ENCODE measurements at regions of chr12 and their contacts with region 1.

Region 1: DNA sequence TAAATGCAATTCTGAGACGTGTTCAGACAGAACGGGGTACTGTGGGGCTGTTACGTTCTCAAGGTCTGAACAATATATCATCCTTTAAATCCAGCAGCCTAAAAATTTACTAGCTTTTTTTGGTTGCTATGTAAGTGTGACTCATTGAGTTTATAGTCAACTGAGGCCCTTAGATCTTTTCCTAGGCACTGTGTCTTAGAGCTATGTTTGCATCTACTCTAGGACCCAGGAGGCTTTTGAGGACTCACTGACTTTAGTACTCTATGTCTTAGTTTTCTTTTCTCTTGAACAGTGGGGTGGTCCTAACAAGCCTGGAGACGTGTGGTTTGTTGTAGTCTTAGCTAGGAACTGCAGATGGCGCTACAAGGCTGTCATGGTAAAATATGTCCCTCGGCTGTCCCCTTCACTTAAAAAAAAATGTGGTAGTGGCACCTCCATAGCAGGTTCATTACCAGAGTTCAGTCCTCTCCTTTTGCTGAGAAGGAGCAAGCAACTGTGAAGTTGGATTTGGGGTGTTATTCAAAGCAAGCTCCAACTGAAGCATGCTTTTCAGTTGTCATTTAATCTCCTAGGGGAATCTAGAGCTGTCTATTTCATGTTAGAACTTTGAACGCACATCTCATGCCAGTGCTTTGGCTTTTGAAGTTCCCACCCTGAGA is 8.7 kb upstream of the SPATS2 start:
- DNase-seq: peak; percentile 69
- H3K4me3 Mint-ChIP-seq: no peak overlapping the region
- H3K27ac Mint-ChIP-seq: no peak overlapping the region
- H3K4me1 Mint-ChIP-seq: peaks cover 5% of the 10 kb centered on the region
- H3K27me3 Mint-ChIP-seq: peaks cover 21% of the 10 kb centered on the region

Region 2: DNA sequence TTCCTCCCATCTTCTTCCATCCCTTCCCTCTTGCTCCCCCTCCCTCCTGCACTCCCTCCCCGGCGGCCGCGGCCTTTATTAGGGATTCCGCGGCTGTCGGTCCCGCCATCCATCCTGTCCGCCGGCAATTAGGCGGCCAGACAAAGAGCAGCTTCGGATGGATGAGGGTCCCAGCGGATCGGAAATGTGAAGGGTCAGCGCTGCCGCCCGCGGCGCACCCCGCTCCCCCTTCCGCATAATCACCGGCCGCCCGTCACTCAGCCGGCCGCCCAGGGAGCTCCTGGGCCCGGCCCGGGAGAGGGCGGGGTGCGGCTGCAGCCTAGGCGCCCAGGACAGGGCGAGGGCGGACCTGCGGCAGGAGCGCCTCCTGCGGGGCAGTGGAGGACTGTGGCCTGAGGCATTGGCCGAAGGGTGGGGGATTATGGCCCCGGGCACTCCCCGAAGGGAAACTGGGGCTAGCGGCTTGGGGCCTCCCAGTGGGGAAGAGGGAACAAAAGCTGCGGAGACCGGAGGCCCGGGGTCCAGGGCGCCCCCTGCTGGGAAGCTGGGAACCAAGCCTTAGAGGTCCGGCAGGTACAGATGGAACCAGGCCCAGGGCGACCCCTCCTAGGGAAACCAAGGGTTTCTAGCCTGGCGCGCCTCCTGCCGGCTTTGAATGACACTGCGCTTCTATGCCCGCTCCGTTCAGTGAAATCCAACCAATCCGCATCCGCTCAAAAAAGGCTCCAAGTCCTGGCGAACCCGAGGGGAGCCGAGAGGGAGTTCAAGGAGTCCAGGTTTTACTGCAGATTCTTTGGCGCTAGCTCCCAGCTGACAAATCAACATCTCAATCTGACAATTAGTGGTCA is 16.3 kb before region 1 on chr12:
- CTCF ChIA-PET with region 1: interaction called, 98 read pairs
- POLR2A ChIA-PET with region 1: no interaction called
- intact Hi-C with region 1: no loop called
- DNase-seq: peak; percentile 90
- H3K4me3 Mint-ChIP-seq: peak overlapping the region; percentile 53
- H3K27ac Mint-ChIP-seq: no peak overlapping the region
- H3K4me1 Mint-ChIP-seq: peaks cover 43% of the 10 kb centered on the region
- H3K27me3 Mint-ChIP-seq: peaks cover 64% of the 10 kb centered on the region

Region 3: GRCh38 chr12:49462083-49462744 is 103.6 kb after region 1 on chr12:
- CTCF ChIA-PET with region 1: interaction called, 13 read pairs
- POLR2A ChIA-PET with region 1: interaction called, 6 read pairs
- intact Hi-C with region 1: no loop called
- DNase-seq: no peak
- H3K4me3 Mint-ChIP-seq: no peak overlapping the region
- H3K27ac Mint-ChIP-seq: no peak overlapping the region
- H3K4me1 Mint-ChIP-seq: no peaks in the 10 kb centered on the region
- H3K27me3 Mint-ChIP-seq: no peaks in the 10 kb centered on the region

Region 4: DNA sequence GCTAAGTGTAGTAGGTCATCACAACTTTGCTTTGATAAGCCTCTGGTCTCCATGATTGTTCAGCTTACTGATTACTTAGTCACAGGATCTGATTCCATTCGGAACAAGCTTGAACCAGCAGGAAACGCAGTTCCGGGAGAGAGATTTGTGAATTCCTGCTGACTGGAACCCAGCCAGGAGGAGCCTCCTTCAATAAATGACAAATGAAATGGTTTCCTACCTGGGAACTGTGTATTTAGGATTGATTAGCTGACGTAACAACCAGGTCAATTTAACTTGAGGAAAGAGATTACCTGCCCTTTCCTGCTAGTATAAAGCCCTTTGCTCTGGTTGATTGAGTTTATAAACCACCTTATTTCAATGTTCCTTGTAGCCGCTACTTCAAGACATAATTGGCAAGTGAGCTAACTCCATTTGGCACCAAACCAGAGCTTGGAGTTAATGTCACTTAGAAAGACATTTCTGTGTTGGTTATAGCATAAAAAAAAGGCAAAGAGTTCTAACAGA is 145.1 kb after region 1 on chr12:
- CTCF ChIA-PET with region 1: interaction called, 428 read pairs
- POLR2A ChIA-PET with region 1: no interaction called
- intact Hi-C with region 1: no loop called
- DNase-seq: no peak
- H3K4me3 Mint-ChIP-seq: no peak overlapping the region
- H3K27ac Mint-ChIP-seq: no peak overlapping the region
- H3K4me1 Mint-ChIP-seq: peaks cover 1% of the 10 kb centered on the region
- H3K27me3 Mint-ChIP-seq: no peaks in the 10 kb centered on the region

Region 5: GRCh38 chr12:49567611-49568441 is 209.2 kb after region 1 on chr12 and contains the start of gene MCRS1:
- CTCF ChIA-PET with region 1: interaction called, 13 read pairs
- POLR2A ChIA-PET with region 1: no interaction called
- intact Hi-C with region 1: no loop called
- DNase-seq: peak; percentile 90
- H3K4me3 Mint-ChIP-seq: peak within 1 kb of the TSS; percentile 98
- H3K27ac Mint-ChIP-seq: peak within 1 kb of the TSS; percentile 96
- H3K4me1 Mint-ChIP-seq: peaks cover 47% of the 10 kb centered on the region
- H3K27me3 Mint-ChIP-seq: no peaks in the 10 kb centered on the region
- total RNA-seq, gene MCRS1: 52.3 to 56.8 TPM